ENCODE measurements at regions of chr1 and their contacts with region 1.

Region 1: GRCh38 chr1:151594143-151594625 is 17.7 kb upstream of the SNX27 start:
- DNase-seq: no peak
- H3K4me3 ChIP-seq: no peak overlapping the region
- CTCF ChIP-seq: peak; percentile 83

Region 2: GRCh38 chr1:151534665-151535278 is 59.4 kb before region 1 on chr1:
- CTCF ChIA-PET with region 1: interaction called, 23 read pairs
- POLR2A ChIA-PET with region 1: no interaction called
- DNase-seq: no peak
- H3K4me3 ChIP-seq: no peak overlapping the region
- CTCF ChIP-seq: peak; percentile 94

Region 3: GRCh38 chr1:151574545-151575529 is 19.3 kb before region 1 on chr1:
- CTCF ChIA-PET with region 1: interaction called, 47 read pairs
- POLR2A ChIA-PET with region 1: no interaction called
- DNase-seq: no peak
- H3K4me3 ChIP-seq: no peak overlapping the region
- CTCF ChIP-seq: no peak

Region 4: DNA sequence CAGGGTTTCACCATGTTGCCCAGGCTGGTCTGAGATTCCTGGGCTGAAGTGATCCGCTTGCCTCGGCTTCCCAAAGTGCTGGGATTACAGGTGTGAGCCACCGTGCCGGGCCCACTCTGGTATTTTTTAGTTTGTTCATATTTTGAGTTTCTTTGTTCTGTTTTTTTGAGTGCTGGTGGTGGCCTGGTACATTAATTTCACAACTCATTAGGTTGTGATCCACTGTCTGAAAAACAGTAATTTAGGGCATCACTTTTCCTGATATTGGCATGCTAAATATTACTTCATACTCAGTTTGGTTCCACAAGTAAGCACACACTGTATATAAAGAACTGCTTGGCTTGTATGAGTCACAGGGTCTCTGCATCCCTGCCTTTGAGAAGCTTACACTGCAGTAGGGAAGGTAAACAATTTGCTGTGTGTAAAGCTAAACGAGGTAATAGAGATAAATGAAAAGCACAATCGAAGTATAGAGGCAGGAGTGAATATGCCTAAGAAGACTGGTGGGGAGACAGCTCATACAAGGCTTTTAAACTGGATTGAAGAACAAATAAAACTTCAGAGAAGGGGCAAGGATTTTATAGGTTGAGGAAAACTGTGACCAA is 25.4 kb after region 1 on chr1:
- CTCF ChIA-PET with region 1: interaction called, 21 read pairs
- POLR2A ChIA-PET with region 1: no interaction called
- DNase-seq: no peak
- H3K4me3 ChIP-seq: no peak overlapping the region
- CTCF ChIP-seq: no peak

Region 5: GRCh38 chr1:151693076-151693651 is 99.0 kb after region 1 on chr1:
- CTCF ChIA-PET with region 1: interaction called, 16 read pairs
- POLR2A ChIA-PET with region 1: no interaction called
- DNase-seq: no peak
- H3K4me3 ChIP-seq: no peak overlapping the region
- CTCF ChIP-seq: peak; percentile 65

Region 6: DNA sequence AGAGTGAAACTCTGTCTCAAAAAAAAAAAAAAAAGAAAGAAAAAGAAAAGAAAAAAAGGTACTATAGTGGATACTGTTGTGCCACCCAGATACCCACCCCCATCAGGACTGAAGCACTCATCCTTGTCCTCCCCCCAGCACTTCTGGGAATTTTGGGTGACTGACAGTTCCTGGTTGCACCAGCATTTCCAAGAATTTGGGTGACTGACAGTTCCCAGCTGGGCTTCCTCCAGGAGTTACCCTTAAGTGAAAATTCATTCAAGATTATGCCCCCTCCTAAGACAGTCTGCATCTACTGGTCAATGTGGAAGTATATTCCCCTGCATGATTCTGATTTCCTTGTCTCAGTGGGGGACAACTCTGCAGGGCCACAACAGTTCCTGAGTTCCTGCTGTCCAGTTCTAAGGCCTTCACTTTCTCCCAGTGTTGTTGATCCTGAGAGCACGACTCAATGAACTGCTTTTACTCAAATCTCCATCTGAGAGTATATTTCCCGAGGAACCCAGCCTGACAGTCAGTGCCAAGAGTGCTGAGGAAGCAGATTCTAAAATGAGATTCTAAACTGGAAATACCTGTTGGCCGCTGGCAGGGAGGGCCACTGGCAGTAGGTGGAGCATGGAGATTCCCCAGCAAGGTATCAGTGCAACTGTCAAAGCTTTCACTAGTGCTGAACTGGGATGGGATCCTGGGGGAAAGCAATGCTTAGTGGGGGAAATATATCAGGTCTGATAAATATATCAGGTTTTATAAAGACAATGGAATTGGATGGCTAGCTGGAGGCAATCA is 145.6 kb after region 1 on chr1:
- CTCF ChIA-PET with region 1: interaction called, 28 read pairs
- POLR2A ChIA-PET with region 1: no interaction called
- DNase-seq: no peak
- H3K4me3 ChIP-seq: no peak overlapping the region
- CTCF ChIP-seq: no peak

Region 7: GRCh38 chr1:151947140-151947539 is 353.0 kb after region 1 on chr1:
- CTCF ChIA-PET with region 1: no interaction called
- POLR2A ChIA-PET with region 1: no interaction called
- DNase-seq: no peak
- H3K4me3 ChIP-seq: no peak overlapping the region
- CTCF ChIP-seq: no peak